ENCODE measurements at regions of chr12 and their contacts with region 1.

Region 1: GRCh38 chr12:54191550-54192022 is 2.8 kb upstream of the SMUG1 start:
- DNase-seq: peak; percentile 61 to 92 (median 78)
- ATAC-seq: peak; percentile 74
- H3K4me3 ChIP-seq: no peak overlapping the region
- H3K4me3 Mint-ChIP-seq: no peak overlapping the region
- H3K27ac ChIP-seq: no peak overlapping the region
- H3K27ac Mint-ChIP-seq: no peak overlapping the region
- H3K4me1 ChIP-seq: peaks cover 9% of the 10 kb centered on the region
- H3K4me1 Mint-ChIP-seq: peaks cover 24% of the 10 kb centered on the region
- H3K27me3 ChIP-seq: peaks cover 6 to 15% of the 10 kb centered on the region in 2 experiments
- H3K27me3 Mint-ChIP-seq: peaks cover 39% of the 10 kb centered on the region
- CTCF ChIP-seq: peak; percentile 68

Region 2: GRCh38 chr12:53379389-53380103 is 812.0 kb before region 1 on chr12:
- CTCF ChIA-PET with region 1: no interaction called
- POLR2A ChIA-PET with region 1: no interaction called
- intact Hi-C with region 1: no loop called
- DNase-seq: peak in 8 of 9 experiments; percentile 79 to 100 (median 92)
- ATAC-seq: peak; percentile 73
- H3K4me3 ChIP-seq: peak overlapping the region; percentile 64 to 65
- H3K4me3 Mint-ChIP-seq: no peak overlapping the region
- H3K27ac ChIP-seq: peak overlapping the region; percentile 61 to 83
- H3K27ac Mint-ChIP-seq: no peak overlapping the region
- H3K4me1 ChIP-seq: peaks cover 44% of the 10 kb centered on the region
- H3K4me1 Mint-ChIP-seq: peaks cover 35% of the 10 kb centered on the region
- H3K27me3 ChIP-seq: no peaks in the 10 kb centered on the region
- H3K27me3 Mint-ChIP-seq: no peaks in the 10 kb centered on the region
- CTCF ChIP-seq: no peak

Region 3: DNA sequence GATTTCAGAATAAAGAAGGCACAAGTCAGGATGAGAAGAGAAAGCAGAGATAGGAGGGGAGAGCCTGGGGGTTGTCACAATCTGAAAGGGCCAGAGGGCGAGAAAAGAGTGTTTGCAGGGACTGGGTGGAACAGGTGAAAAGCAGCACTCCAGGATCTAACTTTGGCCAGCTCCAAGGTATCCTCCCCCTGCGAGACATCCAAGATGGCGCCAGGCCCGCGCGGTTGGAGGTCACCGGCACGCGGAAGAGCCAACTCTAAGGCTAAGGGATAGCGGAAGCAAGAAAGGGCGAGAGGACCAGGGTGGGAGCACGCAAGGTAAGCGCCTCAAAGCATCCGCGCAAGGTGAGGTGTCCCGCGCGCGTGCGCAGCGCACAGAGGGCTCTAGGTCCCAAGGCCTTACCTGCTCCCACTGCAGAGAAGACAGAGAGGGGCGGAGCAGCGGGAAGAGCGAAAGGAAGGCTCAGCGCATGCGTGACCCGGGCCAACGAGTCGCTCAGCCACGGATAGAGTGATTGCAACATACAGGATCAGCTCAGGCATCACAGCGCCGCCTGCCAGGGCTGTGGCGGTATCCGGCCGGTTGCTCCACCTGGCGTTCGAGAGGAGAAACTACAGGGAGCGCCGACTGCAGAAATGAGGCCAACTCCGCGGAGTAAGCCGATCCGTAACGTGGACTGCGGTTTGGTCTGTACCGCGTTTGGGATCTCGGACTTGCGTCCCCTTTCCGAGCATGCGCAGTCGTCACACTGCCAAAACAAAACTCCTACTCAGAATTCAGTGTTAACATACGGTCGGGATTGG is 515.7 kb before region 1 on chr12 and contains the start of gene ATP5MC2:
- CTCF ChIA-PET with region 1: no interaction called
- POLR2A ChIA-PET with region 1: no interaction called
- intact Hi-C with region 1: loop called in 1 of 2 experiments (anchors 2 kb)
- DNase-seq: peak; percentile 96 to 99 (median 97)
- ATAC-seq: peak; percentile 90
- H3K4me3 ChIP-seq: peak within 1 kb of the TSS; percentile 67 to 92
- H3K4me3 Mint-ChIP-seq: peak within 1 kb of the TSS; percentile 92
- H3K27ac ChIP-seq: peak within 1 kb of the TSS; percentile 60 to 84
- H3K27ac Mint-ChIP-seq: peak within 1 kb of the TSS; percentile 95
- H3K4me1 ChIP-seq: peaks cover 14% of the 10 kb centered on the region
- H3K4me1 Mint-ChIP-seq: peaks cover 36% of the 10 kb centered on the region
- H3K27me3 ChIP-seq: peaks cover 0 to 16% of the 10 kb centered on the region in 2 experiments
- H3K27me3 Mint-ChIP-seq: peaks cover 16% of the 10 kb centered on the region
- CTCF ChIP-seq: peak; percentile 99
- total RNA-seq, gene ATP5MC2: 220 to 229 TPM

Region 4: GRCh38 chr12:53727310-53728041 is 464.1 kb before region 1 on chr12 and contains the start of gene CALCOCO1:
- CTCF ChIA-PET with region 1: no interaction called
- POLR2A ChIA-PET with region 1: no interaction called
- intact Hi-C with region 1: loop called in 1 of 2 experiments (anchors 1 kb)
- DNase-seq: peak; percentile 95 to 99 (median 97)
- ATAC-seq: peak; percentile 98
- H3K4me3 ChIP-seq: peak within 1 kb of the TSS; percentile 67 to 76
- H3K4me3 Mint-ChIP-seq: peak within 1 kb of the TSS; percentile 95
- H3K27ac ChIP-seq: peak within 1 kb of the TSS; percentile 65 to 72
- H3K27ac Mint-ChIP-seq: peak within 1 kb of the TSS; percentile 92
- H3K4me1 ChIP-seq: peaks cover 18% of the 10 kb centered on the region
- H3K4me1 Mint-ChIP-seq: peaks cover 30% of the 10 kb centered on the region
- H3K27me3 ChIP-seq: no peaks in the 10 kb centered on the region
- H3K27me3 Mint-ChIP-seq: no peaks in the 10 kb centered on the region
- CTCF ChIP-seq: no peak
- total RNA-seq, gene CALCOCO1: 49.2 to 49.5 TPM

Region 5: DNA sequence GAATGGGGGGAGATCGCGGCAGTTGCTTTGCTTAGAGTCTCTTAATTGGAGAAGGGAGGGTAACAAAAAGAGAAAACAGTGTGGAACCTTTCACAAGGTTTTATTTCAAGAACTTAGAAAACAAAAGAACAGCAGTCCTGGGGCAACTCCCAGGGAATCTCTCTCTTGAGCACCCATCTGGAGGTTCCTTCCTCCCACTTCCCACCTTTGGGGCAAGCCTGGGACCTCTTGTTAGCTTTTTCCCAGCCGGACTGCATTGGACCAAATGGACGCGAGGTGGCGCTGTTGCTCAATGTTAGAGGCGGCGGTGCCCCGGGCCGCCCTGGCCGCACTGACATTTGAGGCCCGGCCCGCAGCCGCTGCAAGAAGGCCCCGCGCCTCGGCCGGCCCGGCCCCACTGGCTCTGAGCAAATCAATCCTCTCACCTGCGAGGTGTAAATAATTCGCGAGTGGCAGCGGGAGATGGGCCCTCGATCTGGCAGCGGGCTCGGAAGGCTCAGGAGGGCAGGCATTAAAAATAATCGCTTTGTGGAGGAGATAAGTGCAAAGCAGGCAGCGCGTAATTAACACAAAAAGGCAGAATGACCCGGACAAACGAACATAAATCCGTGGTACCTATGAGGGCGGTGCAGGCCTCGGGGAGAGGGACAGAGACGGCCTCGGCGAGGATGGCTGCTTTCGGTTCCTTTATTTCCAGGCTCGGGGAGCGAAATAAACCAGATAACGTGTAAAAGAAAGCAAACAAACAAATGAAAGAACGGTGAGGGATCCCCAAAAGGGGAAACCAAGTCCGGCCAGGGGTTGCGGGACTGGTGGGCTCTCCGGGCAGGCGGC is 185.5 kb before region 1 on chr12:
- CTCF ChIA-PET with region 1: interaction called, 372 read pairs
- POLR2A ChIA-PET with region 1: interaction called, 8 read pairs
- intact Hi-C with region 1: loop called (anchors 1 kb)
- DNase-seq: peak; percentile 71 to 92 (median 86)
- ATAC-seq: peak; percentile 80
- H3K4me3 ChIP-seq: peak overlapping the region; percentile 24 to 62
- H3K4me3 Mint-ChIP-seq: peak overlapping the region; percentile 82
- H3K27ac ChIP-seq: no peak overlapping the region
- H3K27ac Mint-ChIP-seq: no peak overlapping the region
- H3K4me1 ChIP-seq: peaks cover 22% of the 10 kb centered on the region
- H3K4me1 Mint-ChIP-seq: peaks cover 25% of the 10 kb centered on the region
- H3K27me3 ChIP-seq: peaks cover 72 to 85% of the 10 kb centered on the region in 2 experiments
- H3K27me3 Mint-ChIP-seq: peaks cover 87% of the 10 kb centered on the region
- CTCF ChIP-seq: peak; percentile 93

Region 6: DNA sequence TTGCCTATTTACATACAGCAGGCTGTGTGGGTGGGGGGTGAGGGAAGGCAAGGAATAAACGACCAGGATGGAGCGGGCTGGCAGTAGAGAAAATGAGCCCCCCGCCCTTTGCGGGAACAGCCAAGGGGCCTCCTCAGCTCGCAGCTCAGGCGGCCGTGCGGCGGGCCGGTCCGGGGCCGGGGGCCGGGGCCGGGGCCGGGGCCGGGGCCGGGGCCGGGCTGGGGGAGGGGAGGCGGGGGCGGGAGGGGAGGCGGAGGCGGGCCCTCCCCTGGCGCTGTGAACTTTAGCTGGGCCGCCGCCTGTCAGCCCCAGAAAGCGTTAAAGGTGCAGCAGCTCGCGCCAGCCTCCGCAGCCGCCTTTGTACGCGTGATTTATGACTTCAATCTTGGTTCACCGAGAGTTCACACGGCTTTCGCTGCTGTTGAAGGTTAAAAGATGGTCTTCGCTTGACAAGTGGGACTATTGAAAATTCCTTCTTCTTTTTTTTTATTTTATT is 109.1 kb before region 1 on chr12:
- CTCF ChIA-PET with region 1: interaction called, 4 read pairs
- POLR2A ChIA-PET with region 1: no interaction called
- intact Hi-C with region 1: loop called in 1 of 2 experiments (anchors 2 kb)
- DNase-seq: peak; percentile 21 to 74 (median 55)
- ATAC-seq: peak; percentile 42
- H3K4me3 ChIP-seq: peak overlapping the region; percentile 46 to 52
- H3K4me3 Mint-ChIP-seq: peak overlapping the region; percentile 81
- H3K27ac ChIP-seq: peak overlapping the region; percentile 48 to 77
- H3K27ac Mint-ChIP-seq: peak overlapping the region; percentile 93
- H3K4me1 ChIP-seq: peaks cover 10% of the 10 kb centered on the region
- H3K4me1 Mint-ChIP-seq: peaks cover 23% of the 10 kb centered on the region
- H3K27me3 ChIP-seq: no peaks in the 10 kb centered on the region
- H3K27me3 Mint-ChIP-seq: no peaks in the 10 kb centered on the region
- CTCF ChIP-seq: no peak

Region 7: DNA sequence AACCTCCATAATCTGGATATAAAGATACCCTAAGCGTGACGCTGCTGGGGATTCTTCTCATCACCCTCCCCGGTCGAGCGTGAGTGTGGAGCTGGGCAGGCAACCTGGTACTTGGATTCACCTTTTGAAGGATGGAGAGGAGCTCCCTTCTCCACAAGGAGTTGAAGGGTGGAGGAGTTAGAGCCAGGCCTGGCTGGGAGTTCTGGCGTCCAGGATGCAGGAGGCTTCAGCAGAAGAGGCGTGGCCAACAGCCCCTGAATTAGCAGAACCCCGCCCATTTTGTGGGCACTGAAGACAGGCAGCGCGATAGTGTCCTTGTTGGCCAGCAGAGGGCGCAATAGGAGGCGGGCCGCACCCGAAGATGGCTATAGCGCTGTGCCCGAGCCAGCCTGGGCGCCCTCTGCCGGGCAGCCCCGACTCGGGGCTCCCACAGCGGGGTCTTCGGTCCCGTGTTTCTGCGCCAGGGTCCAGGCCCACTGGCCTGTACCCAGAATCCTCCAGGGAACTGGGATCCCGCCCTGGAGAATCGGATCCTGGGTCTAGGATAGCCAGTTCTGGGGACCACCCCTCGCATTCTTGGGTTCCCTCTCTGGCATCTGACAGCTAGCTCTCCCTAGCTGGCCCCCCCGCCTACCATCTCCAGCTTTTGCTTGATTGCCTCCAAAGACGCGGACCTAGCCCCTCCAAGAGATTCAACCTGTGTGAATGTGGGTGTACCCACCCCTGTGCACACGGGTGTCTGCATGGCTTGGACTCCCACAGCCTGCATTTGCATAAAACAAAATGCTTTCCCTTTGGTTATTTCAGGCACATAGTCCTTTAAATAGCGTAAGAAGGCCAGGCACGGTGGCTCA is 23.2 kb after region 1 on chr12:
- CTCF ChIA-PET with region 1: interaction called, 63 read pairs
- POLR2A ChIA-PET with region 1: interaction called, 3 read pairs
- intact Hi-C with region 1: loop called (anchors 1 to 2 kb)
- DNase-seq: peak; percentile 78 to 96 (median 91)
- ATAC-seq: peak; percentile 86
- H3K4me3 ChIP-seq: peak overlapping the region; percentile 34 to 47
- H3K4me3 Mint-ChIP-seq: peak overlapping the region; percentile 72
- H3K27ac ChIP-seq: no peak overlapping the region
- H3K27ac Mint-ChIP-seq: no peak overlapping the region
- H3K4me1 ChIP-seq: peaks cover 30% of the 10 kb centered on the region
- H3K4me1 Mint-ChIP-seq: peaks cover 35% of the 10 kb centered on the region
- H3K27me3 ChIP-seq: peaks cover 0 to 7% of the 10 kb centered on the region in 2 experiments
- H3K27me3 Mint-ChIP-seq: peaks cover 22% of the 10 kb centered on the region
- CTCF ChIP-seq: peak; percentile 99